Activated CD4-positive, alpha-beta T cell treated with anti-CD3 and anti-CD28 coated beads for 36 hours (primary cell): ENCODE measurements at regions of chr1 and their contacts with region 1.

Region 1: DNA sequence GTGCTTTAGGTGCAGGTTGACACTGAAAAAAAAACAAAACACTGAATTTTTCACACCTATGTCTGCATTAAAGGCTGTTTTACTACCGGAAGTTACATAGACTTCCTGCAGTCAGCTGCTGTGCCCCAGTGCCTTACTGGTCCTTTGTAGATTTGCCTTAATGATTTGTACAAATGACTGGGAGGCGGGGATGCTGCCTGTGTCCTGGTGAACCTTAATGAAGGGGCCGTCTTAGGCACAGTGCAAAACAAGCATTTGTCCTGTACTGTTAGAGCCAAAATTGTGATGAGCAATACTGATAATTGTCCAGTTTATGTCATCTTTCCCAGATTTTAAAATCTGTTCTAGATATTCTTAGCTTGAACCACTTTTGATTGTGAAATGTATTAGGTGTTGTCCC is 90.9 kb upstream of the PGD start:
- DNase-seq: peak; percentile 11
- ATAC-seq: peak; percentile 47
- H3K4me3 Mint-ChIP-seq: no peak overlapping the region
- H3K27ac Mint-ChIP-seq: peak overlapping the region; percentile 63
- H3K4me1 Mint-ChIP-seq: peaks cover 9% of the 10 kb centered on the region
- H3K27me3 Mint-ChIP-seq: no peaks in the 10 kb centered on the region

Region 2: DNA sequence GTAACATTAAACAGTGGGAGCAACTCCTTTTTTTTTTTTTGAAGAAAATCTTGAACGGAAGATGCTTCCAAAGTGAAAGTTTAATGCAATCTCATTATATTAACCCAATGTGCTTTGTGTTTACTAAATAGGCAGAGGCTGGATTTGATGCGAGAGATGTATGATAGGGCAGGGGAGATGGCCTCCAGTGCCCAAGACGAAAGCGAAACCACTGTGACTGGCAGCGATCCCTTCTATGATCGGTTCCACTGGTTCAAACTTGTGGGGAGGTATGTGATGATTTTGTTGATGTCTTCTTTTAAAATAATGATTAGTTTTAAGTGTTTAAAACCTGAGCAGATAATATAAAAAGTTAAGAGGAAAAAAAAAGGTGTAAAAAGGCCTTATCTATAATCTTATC is 16.6 kb after region 1 on chr1:
- CTCF ChIA-PET with region 1: interaction called, 3 read pairs
- POLR2A ChIA-PET with region 1: no interaction called
- intact Hi-C with region 1: loop called (anchors 1 kb)
- DNase-seq: peak; percentile 18
- ATAC-seq: peak; percentile 55
- H3K4me3 Mint-ChIP-seq: peak overlapping the region; percentile 30
- H3K27ac Mint-ChIP-seq: peak overlapping the region; percentile 16
- H3K4me1 Mint-ChIP-seq: peaks cover 6% of the 10 kb centered on the region
- H3K27me3 Mint-ChIP-seq: no peaks in the 10 kb centered on the region